Activated B cell treated with CpG ODN at 0.5 μM for 24 hours (primary cell): ENCODE measurements at regions of chr19 and their contacts with region 1.

Region 1: GRCh38 chr19:12052497-12053169 is at the start of gene ZNF878:
- DNase-seq: peak; percentile 48
- ATAC-seq: peak; percentile 90
- H3K4me3 Mint-ChIP-seq: peak within 1 kb of the TSS; percentile 87
- H3K27ac Mint-ChIP-seq: peak within 1 kb of the TSS; percentile 27
- H3K4me1 Mint-ChIP-seq: peaks cover 12% of the 10 kb centered on the region
- H3K27me3 Mint-ChIP-seq: peaks cover 4% of the 10 kb centered on the region
- CTCF ChIP-seq: no peak
- total RNA-seq, gene ZNF878: 1.2 and 1.6 TPM in 2 replicates

Region 2: GRCh38 chr19:11881151-11881800 is 171.4 kb before region 1 on chr19:
- CTCF ChIA-PET with region 1: interaction called, 3 read pairs
- POLR2A ChIA-PET with region 1: no interaction called
- intact Hi-C with region 1: loop called (anchors 2 kb)
- DNase-seq: peak; percentile 27
- ATAC-seq: peak; percentile 82
- H3K4me3 Mint-ChIP-seq: no peak overlapping the region
- H3K27ac Mint-ChIP-seq: no peak overlapping the region
- H3K4me1 Mint-ChIP-seq: peaks cover 2% of the 10 kb centered on the region
- H3K27me3 Mint-ChIP-seq: no peaks in the 10 kb centered on the region
- CTCF ChIP-seq: no peak

Region 3: GRCh38 chr19:11942843-11943108 is 109.9 kb before region 1 on chr19:
- CTCF ChIA-PET with region 1: no interaction called
- POLR2A ChIA-PET with region 1: no interaction called
- intact Hi-C with region 1: no loop called
- DNase-seq: no peak
- ATAC-seq: no peak
- H3K4me3 Mint-ChIP-seq: no peak overlapping the region
- H3K27ac Mint-ChIP-seq: no peak overlapping the region
- H3K4me1 Mint-ChIP-seq: peaks cover 6% of the 10 kb centered on the region
- H3K27me3 Mint-ChIP-seq: no peaks in the 10 kb centered on the region
- CTCF ChIP-seq: no peak

Region 4: GRCh38 chr19:11964858-11965645 is 87.6 kb before region 1 on chr19 and contains the start of gene ZNF763:
- CTCF ChIA-PET with region 1: interaction called, 7 read pairs
- POLR2A ChIA-PET with region 1: interaction called, 9 read pairs
- intact Hi-C with region 1: loop called (anchors 1 kb)
- DNase-seq: peak; percentile 79
- ATAC-seq: peak; percentile 92
- H3K4me3 Mint-ChIP-seq: peak within 1 kb of the TSS; percentile 93
- H3K27ac Mint-ChIP-seq: peak within 1 kb of the TSS; percentile 97
- H3K4me1 Mint-ChIP-seq: peaks cover 26% of the 10 kb centered on the region
- H3K27me3 Mint-ChIP-seq: no peaks in the 10 kb centered on the region
- CTCF ChIP-seq: no peak
- total RNA-seq, gene ZNF763: 9.8 and 10.0 TPM in 2 replicates

Region 5: GRCh38 chr19:12035220-12036153 is 17.1 kb before region 1 on chr19 and contains the start of gene ZNF433:
- CTCF ChIA-PET with region 1: no interaction called
- POLR2A ChIA-PET with region 1: interaction called, 13 read pairs
- intact Hi-C with region 1: no loop called
- DNase-seq: peak; percentile 80
- ATAC-seq: peak; percentile 98
- H3K4me3 Mint-ChIP-seq: peak within 1 kb of the TSS; percentile 92
- H3K27ac Mint-ChIP-seq: peak within 1 kb of the TSS; percentile 74
- H3K4me1 Mint-ChIP-seq: peaks cover 20% of the 10 kb centered on the region
- H3K27me3 Mint-ChIP-seq: no peaks in the 10 kb centered on the region
- CTCF ChIP-seq: no peak
- total RNA-seq, gene ZNF433: 6.9 and 8.6 TPM in 2 replicates

Region 6: GRCh38 chr19:12098040-12098439 is 45.4 kb after region 1 on chr19:
- CTCF ChIA-PET with region 1: no interaction called
- POLR2A ChIA-PET with region 1: no interaction called
- intact Hi-C with region 1: no loop called
- DNase-seq: no peak
- ATAC-seq: no peak
- H3K4me3 Mint-ChIP-seq: no peak overlapping the region
- H3K27ac Mint-ChIP-seq: no peak overlapping the region
- H3K4me1 Mint-ChIP-seq: peaks cover 7% of the 10 kb centered on the region
- H3K27me3 Mint-ChIP-seq: peaks cover 3% of the 10 kb centered on the region
- CTCF ChIP-seq: no peak